CD4-positive, alpha-beta memory T cell (primary cell): ENCODE measurements at regions of chr1 and their contacts with region 1.

Region 1: GRCh38 chr1:200620273-200621131 is at the start of gene KIF14:
- DNase-seq: peak; percentile 89 to 95 (median 91)
- H3K4me3 ChIP-seq: peak within 1 kb of the TSS; percentile 69 to 83
- H3K4me3 Mint-ChIP-seq: peak within 1 kb of the TSS; percentile 95 to 99 (median 98)
- H3K27ac ChIP-seq: peak within 1 kb of the TSS; percentile 39
- H3K27ac Mint-ChIP-seq: peak within 1 kb of the TSS; percentile 93 to 97 (median 96)
- H3K4me1 ChIP-seq: peaks cover 24% of the 10 kb centered on the region
- H3K4me1 Mint-ChIP-seq: peaks cover 6 to 23% (median 9%) of the 10 kb centered on the region in 4 donors
- H3K27me3 ChIP-seq: no peaks in the 10 kb centered on the region
- H3K27me3 Mint-ChIP-seq: no peaks in the 10 kb centered on the region
- total RNA-seq, gene KIF14: 0.06 TPM in 1 of 2 experiments, not detected in the other

Region 2: GRCh38 chr1:199410462-199410861 is 1210.0 kb before region 1 on chr1:
- CTCF ChIA-PET with region 1: no interaction called
- POLR2A ChIA-PET with region 1: no interaction called
- intact Hi-C with region 1: no loop called
- DNase-seq: no peak
- H3K4me3 ChIP-seq: no peak overlapping the region
- H3K4me3 Mint-ChIP-seq: no peak overlapping the region
- H3K27ac ChIP-seq: no peak overlapping the region
- H3K27ac Mint-ChIP-seq: no peak overlapping the region
- H3K4me1 ChIP-seq: no peaks in the 10 kb centered on the region
- H3K4me1 Mint-ChIP-seq: no peaks in the 10 kb centered on the region
- H3K27me3 ChIP-seq: no peaks in the 10 kb centered on the region
- H3K27me3 Mint-ChIP-seq: peaks cover 13% of the 10 kb centered on the region in 2 donors

Region 3: DNA sequence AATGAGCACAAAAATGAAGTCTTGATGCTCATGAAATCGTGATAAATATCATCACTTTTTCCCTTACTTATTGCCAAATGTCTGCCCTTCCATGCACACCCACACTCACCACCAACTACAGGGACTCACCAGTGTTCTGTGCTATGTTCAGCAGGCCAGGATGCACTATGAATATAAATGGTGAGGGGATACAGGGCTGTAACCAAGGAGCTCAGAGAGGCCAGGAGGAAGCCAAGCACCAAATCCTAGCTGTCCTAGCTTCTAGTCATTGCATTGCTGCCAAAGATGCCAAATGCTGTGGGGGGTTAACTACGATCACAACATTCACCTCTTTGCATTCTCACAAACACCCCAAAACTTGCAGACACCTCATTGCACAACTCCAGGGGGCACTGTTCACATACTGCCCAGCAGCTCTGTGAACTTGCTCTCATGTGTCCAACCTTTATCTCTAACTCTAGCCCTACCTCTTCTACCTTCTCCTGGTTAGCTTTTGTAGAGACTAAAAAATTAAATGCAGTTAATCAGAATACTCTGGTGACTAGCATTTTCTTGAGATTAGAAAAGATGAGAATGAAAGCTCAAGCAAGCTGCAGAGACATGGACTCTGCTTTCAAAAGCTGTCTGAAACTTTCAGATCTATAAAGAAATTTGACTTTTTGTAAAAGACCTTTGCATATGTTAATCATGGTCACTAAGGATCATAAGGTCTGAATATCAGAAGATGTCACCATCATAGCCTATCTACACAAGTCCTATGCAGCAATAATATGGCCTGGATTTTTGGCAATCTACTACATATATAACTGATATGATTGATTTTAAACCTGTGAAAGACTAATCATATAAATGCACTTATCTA is 14.0 kb after region 1 on chr1:
- CTCF ChIA-PET with region 1: interaction called, 32 read pairs
- POLR2A ChIA-PET with region 1: no interaction called
- intact Hi-C with region 1: no loop called
- DNase-seq: no peak
- H3K4me3 ChIP-seq: no peak overlapping the region
- H3K4me3 Mint-ChIP-seq: no peak overlapping the region
- H3K27ac ChIP-seq: no peak overlapping the region
- H3K27ac Mint-ChIP-seq: no peak overlapping the region
- H3K4me1 ChIP-seq: no peaks in the 10 kb centered on the region
- H3K4me1 Mint-ChIP-seq: no peaks in the 10 kb centered on the region
- H3K27me3 ChIP-seq: no peaks in the 10 kb centered on the region
- H3K27me3 Mint-ChIP-seq: no peaks in the 10 kb centered on the region

Region 4: DNA sequence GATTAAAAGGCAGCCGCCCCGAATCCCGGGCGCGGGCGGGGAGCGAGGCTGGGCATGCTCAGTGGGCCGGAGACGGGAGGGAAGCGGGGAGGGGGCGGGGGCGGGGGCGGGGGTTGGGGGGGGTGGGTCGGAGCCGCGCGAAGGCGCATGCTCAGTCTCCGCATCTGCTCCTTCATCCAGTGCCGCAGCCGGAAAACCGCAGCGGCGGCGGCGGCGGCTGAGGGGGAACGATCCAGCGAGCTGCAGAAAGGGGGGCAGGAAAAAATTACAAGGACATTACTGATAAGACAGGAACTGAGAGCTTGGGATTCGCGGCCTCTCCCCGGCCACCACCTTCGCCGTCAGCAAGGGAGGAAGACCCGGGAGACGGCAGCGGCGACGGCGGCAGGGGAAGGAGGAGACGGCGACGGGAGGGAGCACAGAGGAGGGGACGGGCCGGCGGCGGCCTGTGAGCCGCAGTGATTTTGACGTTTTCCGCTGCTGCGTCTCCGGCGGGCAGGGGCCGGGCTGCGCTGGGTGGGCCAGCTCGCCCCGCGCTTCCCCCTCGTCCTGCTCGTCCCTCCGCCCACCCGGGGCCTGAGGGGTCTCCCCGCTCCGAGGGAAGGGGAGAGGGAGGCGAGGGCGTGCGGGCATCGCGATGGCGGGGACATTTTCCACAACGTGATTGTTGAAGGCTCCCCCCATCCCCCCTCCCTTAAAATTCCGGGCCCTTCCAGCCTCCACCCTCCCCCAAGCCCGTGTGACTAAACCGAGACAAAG is 118.4 kb after region 1 on chr1 and contains the start of gene CAMSAP2:
- CTCF ChIA-PET with region 1: interaction called, 7 read pairs
- POLR2A ChIA-PET with region 1: interaction called, 3 read pairs
- intact Hi-C with region 1: loop called (anchors 10 kb)
- DNase-seq: peak; percentile 62 to 75 (median 68)
- H3K4me3 ChIP-seq: peak within 1 kb of the TSS; percentile 37 to 76
- H3K4me3 Mint-ChIP-seq: peak within 1 kb of the TSS; percentile 95 to 98 (median 98)
- H3K27ac ChIP-seq: peak within 1 kb of the TSS; percentile 60
- H3K27ac Mint-ChIP-seq: peak within 1 kb of the TSS; percentile 86 to 98 (median 94)
- H3K4me1 ChIP-seq: peaks cover 29% of the 10 kb centered on the region
- H3K4me1 Mint-ChIP-seq: peaks cover 23 to 41% (median 30%) of the 10 kb centered on the region in 4 donors
- H3K27me3 ChIP-seq: no peaks in the 10 kb centered on the region
- H3K27me3 Mint-ChIP-seq: no peaks in the 10 kb centered on the region
- total RNA-seq, gene CAMSAP2: 6.1 to 7.5 TPM

Region 5: DNA sequence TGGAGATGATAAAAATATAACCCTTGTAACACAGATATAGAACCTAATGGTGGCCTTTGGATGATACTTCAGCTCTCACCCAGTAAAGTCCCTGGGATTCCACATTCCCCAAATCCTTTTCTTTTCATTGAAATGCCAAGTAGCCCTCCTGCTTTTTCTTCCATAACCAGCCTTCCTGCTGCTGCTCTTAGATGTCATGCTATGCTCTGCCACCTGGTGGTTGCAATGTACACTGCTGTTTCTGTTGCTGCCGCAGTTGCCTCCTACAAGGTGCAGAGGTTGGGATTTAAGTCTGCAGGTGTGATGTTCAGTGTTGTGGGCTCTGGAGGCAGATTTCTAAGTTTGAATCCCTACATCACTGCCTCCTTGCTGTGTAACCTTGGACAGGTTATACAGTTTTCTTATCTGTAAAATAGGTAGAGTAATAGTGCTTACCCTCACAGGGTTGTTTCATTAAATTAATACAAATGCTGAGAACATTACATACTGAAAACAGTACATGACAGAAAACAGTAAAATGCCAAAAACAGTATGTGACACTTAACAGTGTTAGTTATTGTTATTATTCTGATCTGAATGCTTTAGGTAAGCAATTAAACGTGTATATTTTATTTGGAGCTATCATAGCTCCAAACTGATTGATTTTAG is 182.5 kb after region 1 on chr1:
- CTCF ChIA-PET with region 1: interaction called, 159 read pairs
- POLR2A ChIA-PET with region 1: interaction called, 4 read pairs
- intact Hi-C with region 1: loop called (anchors 1 kb)
- DNase-seq: peak; percentile 59 to 70 (median 63)
- H3K4me3 ChIP-seq: no peak overlapping the region
- H3K4me3 Mint-ChIP-seq: no peak overlapping the region
- H3K27ac ChIP-seq: no peak overlapping the region
- H3K27ac Mint-ChIP-seq: no peak overlapping the region
- H3K4me1 ChIP-seq: peaks cover 4% of the 10 kb centered on the region
- H3K4me1 Mint-ChIP-seq: peaks cover 0 to 3% (median 0%) of the 10 kb centered on the region in 4 donors
- H3K27me3 ChIP-seq: no peaks in the 10 kb centered on the region
- H3K27me3 Mint-ChIP-seq: no peaks in the 10 kb centered on the region

Region 6: GRCh38 chr1:201042779-201043461 is 422.4 kb after region 1 on chr1:
- CTCF ChIA-PET with region 1: interaction called, 7 read pairs
- POLR2A ChIA-PET with region 1: no interaction called
- intact Hi-C with region 1: loop called (anchors 1 kb)
- DNase-seq: peak; percentile 67 to 74 (median 72)
- H3K4me3 ChIP-seq: no peak overlapping the region
- H3K4me3 Mint-ChIP-seq: no peak overlapping the region
- H3K27ac ChIP-seq: no peak overlapping the region
- H3K27ac Mint-ChIP-seq: peak overlapping the region in 2 of 7 donors; percentile 37 to 77
- H3K4me1 ChIP-seq: no peaks in the 10 kb centered on the region
- H3K4me1 Mint-ChIP-seq: peaks cover 0 to 3% (median 3%) of the 10 kb centered on the region in 4 donors
- H3K27me3 ChIP-seq: no peaks in the 10 kb centered on the region
- H3K27me3 Mint-ChIP-seq: peaks cover 0 to 3% of the 10 kb centered on the region in 2 donors